ENCODE measurements at regions of chr11 and their contacts with region 1.

Region 1: DNA sequence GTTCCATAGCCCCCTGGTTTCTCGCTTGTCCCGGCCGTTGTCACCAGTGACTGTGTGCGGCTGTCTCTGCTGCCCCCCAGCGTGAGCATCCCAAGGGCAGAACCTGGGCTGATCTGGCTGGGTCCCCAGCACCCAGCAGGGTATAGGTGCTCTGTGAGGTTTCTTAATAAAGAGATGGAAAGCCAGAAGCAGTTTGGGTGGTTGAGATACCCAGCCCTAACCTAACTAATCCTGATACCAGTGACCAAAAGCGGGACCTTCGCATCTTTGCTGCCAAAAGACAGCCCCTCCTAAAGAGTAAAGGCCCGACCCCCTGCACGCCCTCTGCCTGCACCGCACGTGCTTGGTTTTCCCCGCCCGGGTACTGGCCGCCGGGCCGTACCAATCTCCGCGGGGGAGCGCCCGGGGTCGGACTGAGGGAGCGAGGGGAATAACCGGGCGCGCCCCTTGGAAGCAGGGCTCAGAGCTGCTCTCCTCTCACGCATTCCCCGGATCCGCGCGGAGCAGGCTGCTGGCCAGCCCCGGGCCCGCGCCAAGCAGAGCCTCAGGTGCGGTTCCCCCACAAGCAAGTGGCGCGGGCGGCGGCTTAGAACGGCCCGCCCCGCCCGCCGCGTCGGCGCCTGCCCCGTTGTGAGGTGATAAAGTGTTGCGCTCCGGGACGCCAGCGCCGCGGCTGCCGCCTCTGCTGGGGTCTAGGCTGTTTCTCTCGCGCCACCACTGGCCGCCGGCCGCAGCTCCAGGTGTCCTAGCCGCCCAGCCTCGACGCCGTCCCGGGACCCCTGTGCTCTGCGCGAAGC is at the start of gene DGAT2:
- DNase-seq: peak; percentile 84
- ATAC-seq: peak; percentile 90
- H3K4me3 ChIP-seq: peak within 1 kb of the TSS; percentile 74 to 81 (median 80)
- H3K27ac ChIP-seq: peak within 1 kb of the TSS; percentile 90
- H3K4me1 ChIP-seq: peaks cover 73% of the 10 kb centered on the region
- H3K27me3 ChIP-seq: no peaks in the 10 kb centered on the region
- CTCF ChIP-seq: peak; percentile 95
- EP300 ChIP-seq: peak; percentile 23; a peak in 2 of 4 replicates
- POLR2A ChIP-seq: peak; percentile 61 to 83
- RAD21 ChIP-seq: peak; percentile 93
- total RNA-seq, gene DGAT2: 39.4 and 65.6 TPM in 2 replicates

Region 2: GRCh38 chr11:75547580-75548058 is 220.7 kb before region 1 on chr11:
- CTCF ChIA-PET with region 1: interaction called, 3 read pairs
- POLR2A ChIA-PET with region 1: no interaction called
- in situ Hi-C with region 1: no loop called
- intact Hi-C with region 1: loop called (anchors 2 kb)
- DNase-seq: peak; percentile 64
- ATAC-seq: peak; percentile 93
- H3K4me3 ChIP-seq: no peak overlapping the region; a peak in 1 of 6 replicates
- H3K27ac ChIP-seq: no peak overlapping the region
- H3K4me1 ChIP-seq: peaks cover 6% of the 10 kb centered on the region; the same call in 1 of the 2 replicates
- H3K27me3 ChIP-seq: peaks cover 0 to 17% of the 10 kb centered on the region in 2 experiments; a peak in 3 of 5 replicates
- CTCF ChIP-seq: peak; percentile 92
- EP300 ChIP-seq: no peak
- POLR2A ChIP-seq: no peak
- RAD21 ChIP-seq: peak; percentile 81

Region 3: GRCh38 chr11:75673977-75674582 is 94.2 kb before region 1 on chr11:
- CTCF ChIA-PET with region 1: no interaction called
- POLR2A ChIA-PET with region 1: no interaction called
- in situ Hi-C with region 1: no loop called
- intact Hi-C with region 1: no loop called
- DNase-seq: peak; percentile 15
- ATAC-seq: no peak; the same call in 2 of the 3 replicates
- H3K4me3 ChIP-seq: no peak overlapping the region
- H3K27ac ChIP-seq: no peak overlapping the region
- H3K4me1 ChIP-seq: no peaks in the 10 kb centered on the region
- H3K27me3 ChIP-seq: peaks cover 2 to 22% of the 10 kb centered on the region in 2 experiments; a peak in 4 of 5 replicates
- CTCF ChIP-seq: no peak
- EP300 ChIP-seq: no peak
- POLR2A ChIP-seq: no peak
- RAD21 ChIP-seq: no peak

Region 4: GRCh38 chr11:75706260-75706729 is 62.0 kb before region 1 on chr11:
- CTCF ChIA-PET with region 1: interaction called, 38 read pairs
- POLR2A ChIA-PET with region 1: no interaction called
- in situ Hi-C with region 1: no loop called
- intact Hi-C with region 1: loop called (anchors 1 kb)
- DNase-seq: peak; percentile 65
- ATAC-seq: peak; percentile 98
- H3K4me3 ChIP-seq: peak overlapping the region in 2 of 3 experiments; percentile 5 to 55; a peak in 2 of 6 replicates
- H3K27ac ChIP-seq: no peak overlapping the region
- H3K4me1 ChIP-seq: peaks cover 15% of the 10 kb centered on the region
- H3K27me3 ChIP-seq: no peaks in the 10 kb centered on the region; a peak in 1 of 5 replicates
- CTCF ChIP-seq: peak; percentile 99
- EP300 ChIP-seq: no peak
- POLR2A ChIP-seq: no peak
- RAD21 ChIP-seq: peak; percentile 88

Region 5: DNA sequence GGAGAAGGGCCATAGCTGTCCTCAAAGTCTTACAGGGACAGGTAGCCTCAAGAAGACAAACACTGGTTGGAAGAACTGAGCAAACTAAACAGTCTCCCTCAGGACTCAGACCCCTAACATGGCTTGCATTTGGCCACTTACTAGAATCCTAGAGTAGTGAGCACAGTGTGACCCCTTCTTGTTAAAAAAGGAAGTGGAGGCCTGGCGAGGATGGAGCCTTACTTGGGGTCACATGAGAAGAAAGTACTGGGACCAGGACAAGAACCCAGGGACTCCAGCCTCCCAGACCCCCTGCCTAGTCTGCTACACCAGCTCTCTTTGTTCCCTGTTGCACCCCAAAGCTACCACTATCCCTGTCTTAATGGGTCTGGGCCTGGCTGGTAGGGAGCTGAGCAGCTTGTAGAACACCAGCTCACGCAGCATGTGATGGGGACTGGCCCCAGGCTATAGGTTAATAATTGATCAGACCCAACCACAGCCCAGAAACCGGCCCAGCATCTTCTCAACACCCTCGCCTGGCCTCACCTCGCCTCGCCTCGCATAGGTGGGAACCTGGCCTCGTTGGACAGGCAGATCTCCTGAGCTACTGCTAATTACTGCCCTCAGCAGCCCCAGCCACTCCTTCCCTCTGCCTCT is 17.9 kb after region 1 on chr11:
- CTCF ChIA-PET with region 1: no interaction called
- POLR2A ChIA-PET with region 1: interaction called, 62 read pairs
- in situ Hi-C with region 1: no loop called
- intact Hi-C with region 1: loop called (anchors 2 kb)
- DNase-seq: peak; percentile 58
- ATAC-seq: peak; percentile 61
- H3K4me3 ChIP-seq: no peak overlapping the region
- H3K27ac ChIP-seq: peak overlapping the region; percentile 39
- H3K4me1 ChIP-seq: peaks cover 73% of the 10 kb centered on the region
- H3K27me3 ChIP-seq: no peaks in the 10 kb centered on the region
- CTCF ChIP-seq: no peak
- EP300 ChIP-seq: no peak
- POLR2A ChIP-seq: peak in 1 of 2 experiments; percentile 38; a peak in 1 of 4 replicates
- RAD21 ChIP-seq: peak; percentile 26; the same call in 1 of the 2 replicates

Region 6: GRCh38 chr11:75802913-75803820 is 34.9 kb after region 1 on chr11:
- CTCF ChIA-PET with region 1: interaction called, 5 read pairs
- POLR2A ChIA-PET with region 1: interaction called, 3 read pairs
- in situ Hi-C with region 1: no loop called
- intact Hi-C with region 1: loop called (anchors 5 kb)
- DNase-seq: peak; percentile 63
- ATAC-seq: peak; percentile 93
- H3K4me3 ChIP-seq: no peak overlapping the region
- H3K27ac ChIP-seq: no peak overlapping the region
- H3K4me1 ChIP-seq: peaks cover 16% of the 10 kb centered on the region
- H3K27me3 ChIP-seq: no peaks in the 10 kb centered on the region
- CTCF ChIP-seq: peak; percentile 93
- EP300 ChIP-seq: no peak
- POLR2A ChIP-seq: no peak
- RAD21 ChIP-seq: peak; percentile 87